ENCODE measurements at regions of chr13 and their contacts with region 1.

Region 1: DNA sequence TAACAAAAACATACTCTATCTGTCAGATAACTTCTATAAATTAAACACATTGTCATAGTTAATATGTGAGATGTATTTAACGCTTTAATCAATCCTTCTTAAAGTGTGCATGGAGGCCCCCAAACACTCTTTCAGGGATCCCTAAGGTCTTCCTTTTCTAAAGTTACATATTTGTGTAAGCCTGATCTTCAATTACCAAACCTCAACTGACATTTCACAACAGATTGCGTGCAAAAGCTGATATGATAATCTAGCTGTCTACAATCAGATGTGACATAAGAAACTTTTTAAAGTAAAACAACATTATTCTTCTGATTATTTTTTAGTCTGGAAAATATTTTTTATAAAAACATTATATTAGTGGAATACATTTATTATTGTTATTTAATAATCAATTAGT is 1850.4 kb downstream of the OLFM4 start:
- DNase-seq: no peak
- ATAC-seq: no peak
- H3K4me3 ChIP-seq: no peak overlapping the region
- H3K27ac ChIP-seq: no peak overlapping the region
- H3K4me1 ChIP-seq: no peaks in the 10 kb centered on the region
- H3K27me3 ChIP-seq: no peaks in the 10 kb centered on the region
- CTCF ChIP-seq: no peak

Region 2: DNA sequence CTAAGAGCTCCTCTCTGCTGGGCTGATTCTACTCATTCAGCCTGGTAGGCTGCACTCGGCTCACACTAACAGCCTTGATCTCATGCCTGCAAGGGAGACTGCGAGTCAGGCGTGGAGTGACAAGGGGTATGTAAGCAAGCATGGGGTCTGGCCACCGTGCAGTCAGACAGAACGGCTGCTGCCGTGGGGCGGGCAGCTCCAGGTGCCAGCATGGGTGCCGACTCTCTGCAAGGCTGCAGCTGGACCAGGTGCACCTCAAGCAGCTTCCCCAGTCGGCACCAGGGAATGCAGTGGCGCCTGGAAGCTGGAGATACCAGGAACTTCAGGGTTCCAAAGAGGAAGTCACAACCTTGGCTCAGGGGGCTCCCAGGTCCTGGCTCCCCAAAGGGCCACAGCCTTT is 958.1 kb before region 1 on chr13:
- intact Hi-C with region 1: loop called (anchors 10 kb)
- DNase-seq: peak; percentile 29
- ATAC-seq: no peak
- H3K4me3 ChIP-seq: no peak overlapping the region
- H3K27ac ChIP-seq: no peak overlapping the region
- H3K4me1 ChIP-seq: no peaks in the 10 kb centered on the region
- H3K27me3 ChIP-seq: no peaks in the 10 kb centered on the region
- CTCF ChIP-seq: no peak

Region 3: DNA sequence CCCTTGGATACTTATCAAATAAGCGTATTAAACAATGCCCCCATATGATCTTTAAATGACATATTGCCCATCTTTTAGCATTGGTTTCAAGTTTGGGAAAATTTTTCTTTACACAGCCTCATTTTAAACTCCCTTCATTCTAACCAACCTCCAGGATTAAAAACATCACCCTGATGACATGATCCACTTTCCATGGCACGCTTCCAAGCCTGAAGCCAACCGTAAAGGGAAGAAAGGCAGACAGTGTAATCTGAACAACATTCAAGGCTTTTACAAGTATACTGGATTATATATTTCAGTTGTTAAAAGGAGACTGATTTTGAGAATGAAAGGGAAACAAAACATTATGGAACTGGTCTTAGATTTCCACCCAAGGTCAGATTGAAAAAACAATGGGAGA is 128.5 kb before region 1 on chr13:
- intact Hi-C with region 1: no loop called
- DNase-seq: no peak
- ATAC-seq: no peak
- H3K4me3 ChIP-seq: no peak overlapping the region
- H3K27ac ChIP-seq: no peak overlapping the region
- H3K4me1 ChIP-seq: no peaks in the 10 kb centered on the region
- H3K27me3 ChIP-seq: no peaks in the 10 kb centered on the region
- CTCF ChIP-seq: no peak

Region 4: DNA sequence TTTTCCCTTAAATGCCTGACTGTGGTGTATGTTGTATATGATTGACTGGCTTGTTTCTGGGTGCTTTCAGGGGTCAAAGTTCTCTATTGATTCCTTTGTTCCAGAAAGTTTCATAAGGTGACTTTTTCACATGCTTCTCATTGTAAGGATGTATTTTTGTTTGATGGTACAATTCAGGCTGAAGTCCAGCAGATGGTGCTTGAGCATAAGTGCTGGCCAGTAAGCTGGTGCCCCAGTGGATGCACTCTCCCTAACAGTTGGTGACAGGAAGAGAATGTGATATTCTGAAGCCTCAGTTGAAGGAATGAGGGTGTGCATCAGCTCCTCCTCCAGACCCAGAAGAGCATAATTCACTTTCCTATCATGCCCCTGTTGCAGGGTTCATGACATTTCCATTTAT is 320.1 kb after region 1 on chr13:
- intact Hi-C with region 1: no loop called
- DNase-seq: no peak
- ATAC-seq: no peak
- H3K4me3 ChIP-seq: no peak overlapping the region
- H3K27ac ChIP-seq: no peak overlapping the region
- H3K4me1 ChIP-seq: no peaks in the 10 kb centered on the region
- H3K27me3 ChIP-seq: no peaks in the 10 kb centered on the region
- CTCF ChIP-seq: no peak

Measured in lower lobe of right lung (tissue), 2 donors.